HepG2 (cell line): ENCODE measurements at regions of chr1 and their contacts with region 1.

Region 1: GRCh38 chr1:22500471-22500870 is 48.8 kb downstream of the ZBTB40 start:
- DNase-seq: no peak
- ATAC-seq: no peak
- H3K4me3 ChIP-seq: no peak overlapping the region
- H3K27ac ChIP-seq: no peak overlapping the region
- H3K4me1 ChIP-seq: peaks cover 16% of the 10 kb centered on the region
- H3K27me3 ChIP-seq: no peaks in the 10 kb centered on the region
- CTCF ChIP-seq: no peak
- EP300 ChIP-seq: no peak
- POLR2A ChIP-seq: no peak
- RAD21 ChIP-seq: no peak

Region 2: DNA sequence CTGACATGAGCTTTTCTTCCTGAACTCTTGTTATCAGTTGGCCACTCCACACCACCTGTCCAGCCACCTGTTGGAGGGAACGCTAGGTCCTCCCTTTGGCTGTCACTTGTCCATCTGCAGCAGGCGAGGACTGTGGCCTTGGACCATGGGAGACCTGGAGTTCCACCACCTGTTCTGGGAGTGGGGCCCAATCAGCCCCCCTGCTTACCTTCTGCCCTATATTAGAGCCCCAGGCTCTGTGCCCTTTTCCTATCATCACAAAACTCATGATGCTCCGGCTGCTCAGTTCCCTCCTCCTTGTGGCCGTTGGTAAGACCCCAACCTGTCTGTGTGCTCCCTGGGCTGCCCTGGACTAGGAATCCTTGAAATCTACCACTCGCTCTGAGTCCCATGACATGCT is 499.1 kb before region 1 on chr1 and contains the start of gene CELA3A:
- CTCF ChIA-PET with region 1: no interaction called
- POLR2A ChIA-PET with region 1: no interaction called
- in situ Hi-C with region 1: no loop called
- intact Hi-C with region 1: no loop called
- DNase-seq: no peak
- ATAC-seq: no peak
- H3K4me3 ChIP-seq: no peak within 1 kb of the TSS
- H3K27ac ChIP-seq: no peak within 1 kb of the TSS
- H3K4me1 ChIP-seq: peaks cover 67% of the 10 kb centered on the region
- H3K27me3 ChIP-seq: no peaks in the 10 kb centered on the region
- CTCF ChIP-seq: no peak
- EP300 ChIP-seq: no peak
- POLR2A ChIP-seq: no peak
- RAD21 ChIP-seq: no peak
- total RNA-seq, gene CELA3A: not detected in 2 replicates

Region 3: DNA sequence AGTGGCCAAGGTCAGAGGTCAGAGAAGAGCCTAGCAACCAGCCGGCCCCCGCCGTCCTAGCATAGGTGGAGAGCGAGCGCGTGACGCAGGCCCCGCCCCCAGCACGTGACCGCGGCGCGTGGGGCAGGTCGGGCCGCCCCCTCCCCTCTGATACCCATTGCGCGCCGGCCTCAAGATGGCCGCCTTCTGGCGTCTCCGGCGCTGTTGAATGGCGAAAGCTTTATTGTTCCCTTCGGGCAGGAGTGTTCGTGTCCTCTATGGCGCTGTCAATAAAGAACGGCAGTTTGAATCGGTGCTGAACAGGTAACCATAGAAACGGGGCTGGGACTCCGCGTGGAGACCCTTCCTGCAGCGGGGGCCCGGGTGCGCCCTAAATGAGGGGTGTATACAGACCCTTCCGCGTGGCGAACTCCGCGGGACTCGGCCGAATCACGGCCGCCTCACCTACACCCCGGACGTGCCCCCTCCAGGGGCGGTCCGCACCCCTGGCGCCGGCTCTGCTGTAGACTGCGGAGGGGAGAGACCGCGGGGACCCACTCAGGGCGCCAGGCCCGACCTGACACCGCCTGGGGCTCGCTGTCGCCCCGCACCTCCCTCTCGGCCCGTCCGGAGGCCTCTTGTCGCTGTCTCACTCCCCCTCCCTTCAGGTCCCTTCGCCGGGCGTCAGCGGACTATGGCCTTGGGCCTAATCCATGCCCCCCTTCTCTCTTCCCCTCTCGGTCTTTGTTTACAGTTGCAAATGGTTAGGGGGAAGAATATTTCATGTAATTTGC is 48.6 kb before region 1 on chr1 and contains the start of gene ZBTB40:
- CTCF ChIA-PET with region 1: no interaction called
- POLR2A ChIA-PET with region 1: interaction called, 3 read pairs
- in situ Hi-C with region 1: no loop called
- intact Hi-C with region 1: loop called (anchors 5 kb)
- DNase-seq: peak; percentile 94
- ATAC-seq: peak; percentile 84
- H3K4me3 ChIP-seq: peak within 1 kb of the TSS; percentile 88 to 96 (median 95)
- H3K27ac ChIP-seq: peak within 1 kb of the TSS; percentile 85
- H3K4me1 ChIP-seq: peaks cover 83% of the 10 kb centered on the region
- H3K27me3 ChIP-seq: no peaks in the 10 kb centered on the region; a peak in 1 of 5 replicates
- CTCF ChIP-seq: 0 out of 2 replicates have a peak, but pooled peaks have one; percentile 4
- EP300 ChIP-seq: peak; percentile 54 to 70; a peak in 3 of 4 replicates
- POLR2A ChIP-seq: peak; percentile 47 to 62
- RAD21 ChIP-seq: peak; percentile 11; the same call in 1 of the 2 replicates
- total RNA-seq, gene ZBTB40: 14.7 and 16.5 TPM in 2 replicates

Region 4: DNA sequence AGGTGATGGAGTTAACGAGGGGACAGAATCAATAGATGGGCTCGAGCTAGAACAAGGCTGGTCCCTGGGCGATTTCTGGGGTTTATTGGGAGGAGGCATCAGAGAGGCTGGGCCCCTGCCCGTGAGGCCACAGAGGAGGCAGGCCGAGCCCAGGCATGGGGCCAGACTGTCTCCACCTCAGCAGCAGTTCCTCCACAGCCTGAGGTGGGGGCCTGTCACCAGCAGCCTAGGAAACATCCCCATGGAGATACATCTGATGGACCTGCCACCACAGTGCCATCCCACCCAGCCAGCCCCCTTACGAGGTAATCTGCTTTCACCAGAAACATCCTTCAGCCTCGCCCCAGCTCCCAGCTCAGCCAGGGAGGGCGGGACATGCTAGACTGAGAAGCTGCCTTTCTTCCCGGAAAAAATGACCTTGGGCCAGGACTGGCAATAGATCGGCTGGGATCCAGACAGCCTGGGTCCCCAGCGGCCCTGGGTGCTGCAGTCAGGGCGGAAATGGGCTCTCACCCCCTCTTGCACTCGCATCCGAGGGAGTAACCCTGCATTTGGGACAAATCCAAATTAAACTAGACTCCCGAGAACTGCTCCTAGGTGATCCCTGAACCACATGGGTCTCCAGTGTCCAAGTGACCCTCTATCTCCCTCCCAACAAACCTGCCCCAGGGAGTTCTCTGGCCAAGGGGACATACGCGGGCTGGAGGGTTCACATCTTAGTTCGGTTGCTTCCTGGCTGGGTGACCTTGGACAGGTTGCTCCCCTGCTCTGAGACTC is 52.8 kb after region 1 on chr1:
- CTCF ChIA-PET with region 1: no interaction called
- POLR2A ChIA-PET with region 1: no interaction called
- in situ Hi-C with region 1: no loop called
- intact Hi-C with region 1: no loop called
- DNase-seq: no peak
- ATAC-seq: no peak
- H3K4me3 ChIP-seq: no peak overlapping the region
- H3K27ac ChIP-seq: no peak overlapping the region
- H3K4me1 ChIP-seq: peaks cover 13% of the 10 kb centered on the region; the same call in 1 of the 2 replicates
- H3K27me3 ChIP-seq: peaks cover 18 to 90% of the 10 kb centered on the region in 2 experiments
- CTCF ChIP-seq: no peak
- EP300 ChIP-seq: no peak
- POLR2A ChIP-seq: no peak
- RAD21 ChIP-seq: no peak